ENCODE measurements at regions of chr20 and their contacts with region 1.

Region 1: GRCh38 chr20:2301164-2301622 is 5.4 kb downstream of the TGM3 start:
- DNase-seq: peak; percentile 89
- ATAC-seq: peak; percentile 95
- H3K4me3 ChIP-seq: peak overlapping the region in 2 of 5 experiments; percentile 2 to 27
- H3K4me3 Mint-ChIP-seq: peak overlapping the region; percentile 61
- H3K27ac ChIP-seq: peak overlapping the region; percentile 82 to 91
- H3K27ac Mint-ChIP-seq: peak overlapping the region; percentile 93
- H3K4me1 ChIP-seq: peaks cover 23 to 24% of the 10 kb centered on the region in 2 donors
- H3K4me1 Mint-ChIP-seq: peaks cover 22% of the 10 kb centered on the region
- H3K27me3 ChIP-seq: peaks cover 0 to 6% (median 0%) of the 10 kb centered on the region in 4 experiments
- H3K27me3 Mint-ChIP-seq: no peaks in the 10 kb centered on the region
- CTCF ChIP-seq: no peak

Region 2: GRCh38 chr20:2217857-2218539 is 83.2 kb before region 1 on chr20:
- CTCF ChIA-PET with region 1: no interaction called
- POLR2A ChIA-PET with region 1: no interaction called
- intact Hi-C with region 1: loop called (anchors 5 kb)
- DNase-seq: peak; percentile 78
- ATAC-seq: peak; percentile 92
- H3K4me3 ChIP-seq: peak overlapping the region in 1 of 5 experiments; percentile 8
- H3K4me3 Mint-ChIP-seq: peak overlapping the region; percentile 61
- H3K27ac ChIP-seq: peak overlapping the region; percentile 71 to 80
- H3K27ac Mint-ChIP-seq: peak overlapping the region; percentile 89
- H3K4me1 ChIP-seq: peaks cover 10 to 14% of the 10 kb centered on the region in 2 donors
- H3K4me1 Mint-ChIP-seq: peaks cover 20% of the 10 kb centered on the region
- H3K27me3 ChIP-seq: no peaks in the 10 kb centered on the region
- H3K27me3 Mint-ChIP-seq: no peaks in the 10 kb centered on the region
- CTCF ChIP-seq: no peak

Region 3: DNA sequence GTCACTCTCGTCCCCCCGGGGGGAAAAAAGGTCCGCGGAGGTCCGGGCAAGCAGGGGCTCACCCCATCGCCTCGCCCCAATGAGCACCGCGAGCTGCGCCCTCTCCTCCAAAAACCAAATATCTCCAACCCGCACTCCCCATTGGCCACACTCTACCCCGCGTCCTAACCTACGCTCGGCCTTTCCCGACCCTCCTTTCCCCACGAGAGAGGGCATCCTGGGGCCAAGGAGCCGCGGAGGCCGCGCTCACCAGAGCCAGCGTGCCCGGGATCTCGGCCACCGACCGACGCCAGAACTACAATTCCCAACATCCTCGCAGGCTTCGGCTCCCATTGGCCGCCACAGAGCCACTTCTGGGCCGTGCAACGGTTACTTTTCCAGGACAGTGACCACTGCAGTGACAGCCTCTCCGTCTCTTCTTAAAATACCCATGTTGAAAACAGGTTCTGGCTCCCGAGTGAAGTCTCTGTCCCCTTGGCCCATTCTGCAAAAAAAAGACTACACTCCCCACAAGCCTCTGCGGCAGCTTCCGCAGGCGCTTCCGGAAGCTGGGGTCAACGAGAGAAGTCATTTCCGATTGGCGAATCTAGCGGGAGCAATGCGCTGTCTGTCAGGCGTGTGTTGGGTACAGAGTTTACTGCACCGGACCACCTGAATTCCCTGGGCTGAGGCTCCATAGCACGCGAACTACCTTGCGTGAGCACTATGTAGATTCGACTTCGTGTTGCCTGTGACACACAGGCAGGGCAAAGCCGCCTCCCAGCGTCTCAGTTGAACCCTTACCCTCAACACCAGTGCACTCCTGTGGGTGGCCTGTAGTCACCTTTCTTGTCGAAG is 207.7 kb after region 1 on chr20 and contains the start of gene ZNF343:
- CTCF ChIA-PET with region 1: no interaction called
- POLR2A ChIA-PET with region 1: no interaction called
- intact Hi-C with region 1: loop called (anchors 2 kb)
- DNase-seq: peak; percentile 89
- ATAC-seq: peak; percentile 91
- H3K4me3 ChIP-seq: peak within 1 kb of the TSS; percentile 75 to 95 (median 91)
- H3K4me3 Mint-ChIP-seq: peak within 1 kb of the TSS; percentile 100
- H3K27ac ChIP-seq: peak within 1 kb of the TSS; percentile 64 to 77
- H3K27ac Mint-ChIP-seq: peak within 1 kb of the TSS; percentile 99
- H3K4me1 ChIP-seq: peaks cover 8 to 16% of the 10 kb centered on the region in 2 donors
- H3K4me1 Mint-ChIP-seq: peaks cover 20% of the 10 kb centered on the region
- H3K27me3 ChIP-seq: peaks cover 0 to 6% (median 3%) of the 10 kb centered on the region in 4 experiments
- H3K27me3 Mint-ChIP-seq: peaks cover 27% of the 10 kb centered on the region
- CTCF ChIP-seq: no peak
- total RNA-seq, gene ZNF343: 19.8 and 23.4 TPM in 2 replicates